ENCODE measurements at regions of chr12 and their contacts with region 1.

Region 1: GRCh38 chr12:6215932-6216494 is 15.8 kb downstream of the CD9 start:
- DNase-seq: peak; percentile 91 to 98
- H3K4me3 ChIP-seq: peak overlapping the region in 1 of 3 donors; percentile 46
- H3K27ac ChIP-seq: peak overlapping the region; percentile 96 to 98
- H3K4me1 ChIP-seq: peaks cover 12 to 46% of the 10 kb centered on the region in 2 donors
- H3K27me3 ChIP-seq: no peaks in the 10 kb centered on the region
- CTCF ChIP-seq: no peak
- POLR2A ChIP-seq: peak; percentile 26

Region 2: DNA sequence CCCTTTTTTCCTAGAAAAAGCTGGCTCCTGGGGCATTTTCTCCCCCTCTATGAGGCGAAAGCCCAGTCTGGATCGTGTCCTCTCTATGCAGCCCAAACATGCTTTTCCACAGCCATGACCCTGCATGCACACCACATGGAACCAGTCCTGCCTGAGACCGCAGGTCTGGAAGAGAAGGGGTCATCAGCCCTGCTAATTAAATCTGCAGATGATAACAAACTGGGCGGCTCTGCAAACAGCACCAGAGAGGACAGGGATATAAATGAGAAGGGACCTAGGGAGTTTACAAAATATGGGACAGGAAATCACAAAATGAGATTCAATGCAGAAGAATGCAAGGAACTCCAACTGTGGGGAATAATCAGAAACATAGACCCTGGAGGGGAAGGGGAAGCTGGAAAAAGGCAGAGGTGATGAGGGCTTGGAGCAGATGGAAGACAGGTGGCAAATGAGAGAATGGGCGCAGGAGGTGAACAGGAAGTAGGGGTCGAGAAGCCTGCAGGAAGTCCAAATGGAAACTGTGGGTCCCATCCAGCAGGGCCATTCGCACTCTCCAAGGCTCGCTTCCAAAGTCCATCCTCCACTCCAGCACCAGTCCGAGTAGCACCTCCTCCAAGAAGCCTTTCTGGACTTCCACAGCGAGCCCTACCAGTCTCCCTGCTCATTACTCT is 347.3 kb before region 1 on chr12:
- intact Hi-C with region 1: no loop called
- DNase-seq: no peak
- H3K4me3 ChIP-seq: no peak overlapping the region
- H3K27ac ChIP-seq: no peak overlapping the region
- H3K4me1 ChIP-seq: no peaks in the 10 kb centered on the region
- H3K27me3 ChIP-seq: no peaks in the 10 kb centered on the region
- CTCF ChIP-seq: no peak
- POLR2A ChIP-seq: no peak

Region 3: DNA sequence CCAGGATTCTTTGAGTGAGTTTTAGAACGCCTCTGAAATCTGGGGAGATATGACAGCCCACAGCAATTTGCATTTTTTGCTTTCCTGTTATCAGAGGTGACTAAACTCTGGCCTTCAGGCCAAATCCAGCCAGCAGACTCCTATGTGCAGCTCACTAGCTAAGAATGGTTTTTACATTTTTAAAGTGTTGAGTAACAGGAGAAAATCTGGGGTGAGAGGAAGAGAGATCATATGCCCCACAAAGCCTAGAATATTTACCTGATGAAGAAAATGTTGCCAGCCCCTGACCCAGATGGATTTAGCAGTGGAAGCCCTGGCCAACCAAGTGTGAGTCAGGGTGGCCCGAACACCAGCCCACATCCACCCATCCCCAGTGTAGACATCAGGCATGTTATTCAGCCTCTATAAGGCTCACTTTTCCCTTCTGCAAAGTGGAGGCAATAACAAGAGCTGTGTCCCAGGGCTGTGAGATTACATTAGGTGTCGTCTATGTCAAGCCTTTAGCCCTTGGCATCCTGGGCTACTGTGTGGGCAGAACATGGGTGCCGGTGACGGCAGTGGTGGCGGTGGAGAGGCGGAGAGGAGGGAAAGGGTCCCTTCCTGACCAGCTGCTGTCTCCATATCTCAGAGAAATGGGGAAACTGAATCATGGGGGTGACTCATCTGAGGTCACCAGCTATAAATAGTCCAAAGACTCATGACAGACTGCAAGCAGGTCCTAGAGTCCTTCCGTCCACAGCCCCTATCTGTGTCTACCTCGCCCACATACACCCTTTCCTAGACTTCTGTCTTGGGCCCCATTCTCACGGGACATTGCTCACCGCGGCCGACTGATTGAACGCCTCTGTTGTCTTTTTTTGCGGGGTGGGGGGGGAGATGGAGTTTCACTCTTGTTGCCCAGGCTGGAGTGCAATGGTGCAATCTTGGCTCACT is 48.4 kb before region 1 on chr12:
- intact Hi-C with region 1: loop called (anchors 2 kb)
- DNase-seq: no peak
- H3K4me3 ChIP-seq: no peak overlapping the region
- H3K27ac ChIP-seq: peak overlapping the region; percentile 69 to 85
- H3K4me1 ChIP-seq: no peaks in the 10 kb centered on the region
- H3K27me3 ChIP-seq: no peaks in the 10 kb centered on the region
- CTCF ChIP-seq: no peak
- POLR2A ChIP-seq: no peak

Region 4: DNA sequence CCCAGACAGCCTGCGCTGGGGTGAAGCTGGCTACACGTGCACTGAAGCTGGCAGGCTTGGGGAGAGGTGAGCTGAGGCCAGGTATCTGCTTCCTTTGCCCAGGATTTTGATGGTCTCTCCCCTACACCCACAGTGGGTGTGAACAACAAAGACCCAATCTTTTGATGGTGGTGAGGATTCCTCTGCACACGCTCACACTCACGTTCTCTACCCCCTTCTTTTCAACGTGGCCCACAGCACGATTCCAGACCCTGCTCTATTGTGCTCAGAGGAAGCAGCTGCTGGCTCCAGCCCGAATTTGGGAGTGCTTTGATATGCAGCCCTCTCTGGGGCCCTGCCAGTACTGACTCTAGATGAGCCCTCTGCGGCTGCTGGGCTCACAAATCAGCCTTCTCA is 10.9 kb before region 1 on chr12:
- intact Hi-C with region 1: loop called (anchors 1 kb)
- DNase-seq: no peak
- H3K4me3 ChIP-seq: peak overlapping the region in 1 of 3 donors; percentile 32
- H3K27ac ChIP-seq: peak overlapping the region; percentile 95 to 98
- H3K4me1 ChIP-seq: peaks cover 0 to 19% of the 10 kb centered on the region in 2 donors
- H3K27me3 ChIP-seq: no peaks in the 10 kb centered on the region
- CTCF ChIP-seq: no peak
- POLR2A ChIP-seq: no peak

Region 5: DNA sequence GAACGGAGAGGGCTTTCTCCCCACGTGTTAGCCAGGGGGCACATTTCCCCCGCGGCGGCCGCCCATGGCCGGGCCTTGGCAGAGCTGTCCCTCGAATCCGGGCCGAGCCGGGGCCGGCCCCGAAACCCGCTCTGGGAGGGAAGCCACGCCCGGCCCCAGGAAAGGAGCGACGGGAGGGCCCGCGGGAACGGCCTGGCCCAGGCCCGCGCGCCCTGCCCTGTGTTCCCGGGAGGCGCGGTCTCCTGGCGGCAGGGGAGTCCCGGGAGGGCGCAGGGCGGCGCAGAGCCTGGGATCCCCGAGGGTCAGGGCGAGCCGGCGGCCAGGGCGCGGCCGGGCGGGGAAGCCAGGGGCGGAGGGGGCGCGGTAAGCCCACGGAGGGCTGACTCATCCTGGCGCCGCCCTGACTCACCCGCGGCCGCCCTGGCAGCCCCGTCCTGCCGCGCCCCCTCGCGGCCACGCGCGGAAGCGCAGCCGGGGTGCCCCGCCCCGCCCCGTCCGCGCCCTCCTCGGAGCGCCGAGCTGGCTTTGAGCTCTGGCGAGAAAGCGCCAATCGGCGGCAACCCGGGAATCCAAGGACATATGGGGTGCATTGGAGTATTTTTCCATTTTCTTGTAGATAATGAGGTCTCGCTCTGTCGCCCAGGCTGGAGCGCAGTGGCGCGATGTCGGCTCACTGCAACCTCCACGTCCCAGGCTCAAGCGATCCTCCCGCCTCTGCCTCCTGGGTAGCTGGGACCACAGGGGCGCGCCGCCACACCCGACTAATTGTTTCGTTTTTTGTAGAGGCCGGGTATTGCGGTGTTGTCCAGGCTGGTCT is 62.6 kb after region 1 on chr12:
- intact Hi-C with region 1: loop called (anchors 10 kb)
- DNase-seq: peak; percentile 81 to 83
- H3K4me3 ChIP-seq: peak overlapping the region; percentile 49 to 79 (median 59)
- H3K27ac ChIP-seq: peak overlapping the region; percentile 94 to 99
- H3K4me1 ChIP-seq: peaks cover 9 to 20% of the 10 kb centered on the region in 2 donors
- H3K27me3 ChIP-seq: no peaks in the 10 kb centered on the region
- CTCF ChIP-seq: peak; percentile 44 to 99 (median 50)
- POLR2A ChIP-seq: no peak

Region 6: GRCh38 chr12:6953442-6954315 is 737.7 kb after region 1 on chr12:
- intact Hi-C with region 1: no loop called
- DNase-seq: no peak
- H3K4me3 ChIP-seq: peak overlapping the region; percentile 39 to 51 (median 48)
- H3K27ac ChIP-seq: peak overlapping the region in 1 of 2 donors; percentile 61
- H3K4me1 ChIP-seq: no peaks in the 10 kb centered on the region
- H3K27me3 ChIP-seq: no peaks in the 10 kb centered on the region
- CTCF ChIP-seq: no peak
- POLR2A ChIP-seq: no peak